Calu3 (cell line): ENCODE measurements at regions of chr6 and their contacts with region 1.

Region 1: GRCh38 chr6:119594907-119595306 is 245.3 kb upstream of the MAN1A1 start:
- DNase-seq: peak; percentile 4
- H3K4me3 Mint-ChIP-seq: no peak overlapping the region
- H3K27ac Mint-ChIP-seq: no peak overlapping the region
- H3K4me1 Mint-ChIP-seq: no peaks in the 10 kb centered on the region
- H3K27me3 Mint-ChIP-seq: peaks cover 19% of the 10 kb centered on the region
- CTCF ChIP-seq: no peak

Region 2: DNA sequence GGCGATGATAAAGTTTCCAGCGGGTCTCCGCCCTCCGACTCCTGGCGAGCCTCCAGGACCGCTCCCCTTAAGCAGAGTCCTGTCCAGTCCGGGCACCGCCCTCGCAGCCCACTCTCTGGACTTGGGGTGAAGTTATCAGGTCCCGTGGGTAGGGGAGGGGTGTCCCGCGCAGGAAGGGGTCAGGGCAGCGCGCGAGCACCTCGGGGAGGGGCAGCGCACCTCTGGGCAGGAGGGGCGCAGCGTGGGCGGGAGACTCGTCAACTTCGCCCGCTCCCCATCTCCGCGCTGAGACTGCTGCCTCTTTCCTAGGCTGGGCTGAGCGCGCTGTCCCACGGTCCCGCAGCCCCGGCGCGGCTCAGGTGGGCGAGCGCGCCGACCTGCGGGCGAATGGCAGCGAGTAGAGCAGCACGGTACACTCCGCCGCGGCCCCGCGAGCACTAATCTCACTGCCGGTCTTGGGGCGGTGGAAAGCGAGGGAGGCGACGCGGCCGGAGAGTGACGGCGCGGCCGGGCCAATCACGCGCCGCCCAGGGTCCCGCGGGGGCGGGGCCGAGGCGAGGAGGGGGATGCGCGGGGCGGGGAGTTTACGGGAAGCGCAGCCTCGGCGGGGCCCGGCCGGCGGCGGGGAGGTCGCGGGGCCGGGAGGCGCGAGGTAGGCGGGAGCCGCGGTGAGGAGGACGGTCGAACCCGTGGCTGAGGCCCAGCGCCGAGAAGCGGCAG is 245.4 kb before region 1 on chr6 and contains the start of gene MAN1A1:
- CTCF ChIA-PET with region 1: no interaction called
- intact Hi-C with region 1: loop called (anchors 10 kb)
- DNase-seq: peak; percentile 85
- H3K4me3 Mint-ChIP-seq: peak within 1 kb of the TSS; percentile 77
- H3K27ac Mint-ChIP-seq: peak within 1 kb of the TSS; percentile 49
- H3K4me1 Mint-ChIP-seq: peaks cover 24% of the 10 kb centered on the region
- H3K27me3 Mint-ChIP-seq: no peaks in the 10 kb centered on the region
- CTCF ChIP-seq: no peak
- total RNA-seq, gene MAN1A1: 13.3 and 13.7 TPM in 2 replicates

Region 3: GRCh38 chr6:119517428-119517827 is 77.5 kb before region 1 on chr6:
- CTCF ChIA-PET with region 1: no interaction called
- intact Hi-C with region 1: loop called (anchors 5 kb)
- DNase-seq: no peak
- H3K4me3 Mint-ChIP-seq: no peak overlapping the region
- H3K27ac Mint-ChIP-seq: peak overlapping the region; percentile 5
- H3K4me1 Mint-ChIP-seq: peaks cover 15% of the 10 kb centered on the region
- H3K27me3 Mint-ChIP-seq: no peaks in the 10 kb centered on the region
- CTCF ChIP-seq: no peak